ENCODE measurements at regions of chr15 and their contacts with region 1.

Region 1: GRCh38 chr15:76057332-76058000 is 2.3 kb upstream of the TMEM266 start:
- DNase-seq: no peak
- H3K4me3 ChIP-seq: peak overlapping the region in 1 of 4 donors; percentile 8
- H3K27ac ChIP-seq: no peak overlapping the region
- H3K4me1 ChIP-seq: peaks cover 0 to 28% (median 26%) of the 10 kb centered on the region in 4 donors
- H3K27me3 ChIP-seq: peaks cover 0 to 52% (median 10%) of the 10 kb centered on the region in 4 donors
- CTCF ChIP-seq: peak; percentile 57 to 79 (median 77)
- EP300 ChIP-seq: no peak
- POLR2A ChIP-seq: no peak

Region 2: DNA sequence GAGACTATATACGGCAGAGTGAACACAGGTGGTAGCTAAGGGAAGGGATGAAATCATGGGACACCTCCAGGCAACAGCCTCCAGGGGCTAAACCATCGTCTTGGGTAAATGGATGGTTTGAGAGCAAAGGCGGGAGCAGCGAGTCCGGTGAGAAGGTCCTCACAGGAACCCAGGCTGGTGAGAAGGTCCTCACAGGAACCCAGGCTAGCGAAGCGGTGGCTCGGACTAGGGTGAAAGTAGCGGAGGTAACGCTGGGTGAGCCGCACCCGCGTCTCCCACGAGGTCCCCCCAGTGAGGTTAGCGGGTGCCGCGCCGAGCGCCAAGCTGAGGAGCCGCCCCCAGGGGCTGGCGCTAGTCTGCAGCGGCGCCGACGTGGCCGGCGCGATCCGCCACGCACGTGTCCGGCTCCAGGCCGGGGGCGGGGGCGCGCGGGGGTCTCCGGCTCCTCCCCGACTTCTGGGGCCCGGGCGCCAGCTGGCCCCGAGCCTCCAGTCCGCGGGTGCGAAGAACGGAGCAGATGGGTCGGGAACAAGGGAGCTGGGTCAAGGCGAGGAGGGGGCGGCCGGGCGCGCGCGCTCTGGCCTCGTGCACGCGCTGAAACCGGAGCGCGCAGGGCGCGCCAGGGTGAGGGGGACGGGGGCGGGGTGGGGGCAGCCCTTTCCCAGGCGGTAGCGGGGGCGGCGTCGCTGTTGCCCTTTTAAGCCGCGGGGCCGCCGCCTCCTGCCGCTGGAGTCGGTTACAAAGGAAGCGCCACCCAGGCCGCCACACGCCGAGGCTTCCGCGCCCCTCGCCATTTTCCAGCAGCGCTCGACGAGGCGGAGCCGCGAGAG is 214.5 kb before region 1 on chr15 and contains the start of gene UBE2Q2:
- intact Hi-C with region 1: no loop called
- DNase-seq: no peak
- H3K4me3 ChIP-seq: peak within 1 kb of the TSS; percentile 86 to 99 (median 98)
- H3K27ac ChIP-seq: peak within 1 kb of the TSS; percentile 93 to 97 (median 96)
- H3K4me1 ChIP-seq: peaks cover 30 to 63% (median 56%) of the 10 kb centered on the region in 4 donors
- H3K27me3 ChIP-seq: no peaks in the 10 kb centered on the region
- CTCF ChIP-seq: no peak
- EP300 ChIP-seq: no peak
- POLR2A ChIP-seq: no peak
- total RNA-seq, gene UBE2Q2: 64.3 to 76.7 (median 73.3) TPM

Region 3: DNA sequence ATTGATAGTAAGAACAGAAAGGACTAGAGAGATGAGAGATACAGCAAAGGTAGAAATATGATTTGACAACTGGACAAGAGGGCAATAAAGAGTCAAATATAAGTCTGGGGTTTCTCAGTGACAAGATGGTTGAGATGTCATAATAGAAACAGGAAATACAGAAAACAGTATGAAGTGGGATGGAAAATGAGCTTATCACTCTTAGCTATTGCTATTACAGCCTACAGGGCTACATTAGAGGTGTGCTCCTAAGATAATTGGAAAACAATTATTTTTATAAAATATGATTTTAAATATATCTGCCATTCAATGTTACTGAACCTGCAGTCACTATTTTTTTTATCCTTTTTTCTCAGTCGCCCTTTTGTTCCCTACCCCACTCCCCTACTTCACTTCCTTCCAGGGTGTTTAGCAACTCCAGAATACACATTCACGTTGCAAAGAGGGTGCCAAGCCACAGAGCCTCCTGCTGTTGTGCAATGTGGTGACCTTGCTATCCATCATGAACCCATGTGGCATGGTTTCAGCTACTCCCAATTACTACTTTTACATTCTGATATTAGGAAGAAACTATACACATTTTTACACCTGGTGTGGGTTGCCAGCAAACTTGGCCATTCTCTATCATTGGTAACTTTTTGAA is 51.2 kb before region 1 on chr15:
- intact Hi-C with region 1: no loop called
- DNase-seq: no peak
- H3K4me3 ChIP-seq: no peak overlapping the region
- H3K27ac ChIP-seq: no peak overlapping the region
- H3K4me1 ChIP-seq: no peaks in the 10 kb centered on the region
- H3K27me3 ChIP-seq: no peaks in the 10 kb centered on the region
- CTCF ChIP-seq: no peak
- EP300 ChIP-seq: no peak
- POLR2A ChIP-seq: no peak

Region 4: GRCh38 chr15:76139368-76140073 is 82.1 kb after region 1 on chr15:
- intact Hi-C with region 1: loop called (anchors 2 kb)
- DNase-seq: no peak
- H3K4me3 ChIP-seq: peak overlapping the region in 3 of 4 donors; percentile 2 to 23 (median 20)
- H3K27ac ChIP-seq: no peak overlapping the region
- H3K4me1 ChIP-seq: peaks cover 8 to 15% (median 13%) of the 10 kb centered on the region in 4 donors
- H3K27me3 ChIP-seq: peaks cover 0 to 21% (median 0%) of the 10 kb centered on the region in 4 donors
- CTCF ChIP-seq: peak; percentile 84 to 95 (median 85)
- EP300 ChIP-seq: no peak
- POLR2A ChIP-seq: no peak